ENCODE measurements at regions of chr11 and their contacts with region 1.

Region 1: DNA sequence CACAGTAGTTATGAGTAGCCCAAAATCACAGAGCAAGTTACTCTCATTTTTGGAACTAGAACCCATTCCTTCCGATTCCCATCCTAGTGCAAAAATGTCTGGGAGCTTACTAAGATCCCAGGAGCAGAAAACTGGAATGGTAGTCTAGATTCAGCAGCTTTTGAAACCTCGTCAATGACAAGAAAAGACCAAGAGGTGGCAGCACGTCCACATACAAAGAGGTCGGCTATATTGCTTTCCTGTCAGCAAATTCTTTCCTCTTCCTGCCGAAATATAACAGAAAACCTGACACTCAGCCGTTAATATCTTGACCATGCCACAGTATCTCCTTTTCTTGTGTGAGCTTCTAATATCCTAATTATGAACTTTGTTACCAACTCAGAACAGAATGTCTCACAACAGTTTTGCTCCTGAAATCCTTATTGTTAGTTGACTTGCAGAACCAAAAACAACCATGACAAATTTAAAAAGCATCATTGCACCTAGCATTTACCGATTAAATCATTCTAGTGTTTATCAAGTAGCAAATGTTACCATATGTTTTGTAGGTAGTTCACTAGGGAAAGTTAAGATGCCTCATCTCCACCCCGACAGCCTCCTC is 92.8 kb upstream of the OR9G4 start:
- DNase-seq: no peak
- H3K4me3 ChIP-seq: no peak overlapping the region
- H3K27ac ChIP-seq: no peak overlapping the region
- H3K4me1 ChIP-seq: no peaks in the 10 kb centered on the region
- H3K27me3 ChIP-seq: peaks cover 0 to 12% of the 10 kb centered on the region in 2 donors
- CTCF ChIP-seq: peak; percentile 72 to 73

Region 2: GRCh38 chr11:56876621-56877275 is 35.4 kb after region 1 on chr11:
- intact Hi-C with region 1: no loop called
- DNase-seq: no peak
- H3K4me3 ChIP-seq: no peak overlapping the region
- H3K27ac ChIP-seq: no peak overlapping the region
- H3K4me1 ChIP-seq: no peaks in the 10 kb centered on the region
- H3K27me3 ChIP-seq: no peaks in the 10 kb centered on the region
- CTCF ChIP-seq: no peak

Region 3: GRCh38 chr11:56932572-56933220 is 91.4 kb after region 1 on chr11:
- intact Hi-C with region 1: no loop called
- DNase-seq: no peak
- H3K4me3 ChIP-seq: no peak overlapping the region
- H3K27ac ChIP-seq: no peak overlapping the region
- H3K4me1 ChIP-seq: no peaks in the 10 kb centered on the region
- H3K27me3 ChIP-seq: no peaks in the 10 kb centered on the region
- CTCF ChIP-seq: no peak

Region 4: GRCh38 chr11:57255618-57256017 is 414.3 kb after region 1 on chr11:
- intact Hi-C with region 1: loop called (anchors 2 kb)
- DNase-seq: no peak
- H3K4me3 ChIP-seq: no peak overlapping the region
- H3K27ac ChIP-seq: no peak overlapping the region
- H3K4me1 ChIP-seq: no peaks in the 10 kb centered on the region
- H3K27me3 ChIP-seq: peaks cover 0 to 6% of the 10 kb centered on the region in 2 donors
- CTCF ChIP-seq: no peak

Region 5: GRCh38 chr11:57345555-57346211 is 504.4 kb after region 1 on chr11:
- intact Hi-C with region 1: loop called (anchors 10 kb)
- DNase-seq: peak in 1 of 2 donors; percentile 74
- H3K4me3 ChIP-seq: no peak overlapping the region
- H3K27ac ChIP-seq: no peak overlapping the region
- H3K4me1 ChIP-seq: peaks cover 0 to 9% (median 4%) of the 10 kb centered on the region in 4 donors
- H3K27me3 ChIP-seq: peaks cover 0 to 4% of the 10 kb centered on the region in 2 donors
- CTCF ChIP-seq: peak; percentile 57 to 75